Calu3 (cell line): ENCODE measurements at regions of chr1 and their contacts with region 1.

Region 1: DNA sequence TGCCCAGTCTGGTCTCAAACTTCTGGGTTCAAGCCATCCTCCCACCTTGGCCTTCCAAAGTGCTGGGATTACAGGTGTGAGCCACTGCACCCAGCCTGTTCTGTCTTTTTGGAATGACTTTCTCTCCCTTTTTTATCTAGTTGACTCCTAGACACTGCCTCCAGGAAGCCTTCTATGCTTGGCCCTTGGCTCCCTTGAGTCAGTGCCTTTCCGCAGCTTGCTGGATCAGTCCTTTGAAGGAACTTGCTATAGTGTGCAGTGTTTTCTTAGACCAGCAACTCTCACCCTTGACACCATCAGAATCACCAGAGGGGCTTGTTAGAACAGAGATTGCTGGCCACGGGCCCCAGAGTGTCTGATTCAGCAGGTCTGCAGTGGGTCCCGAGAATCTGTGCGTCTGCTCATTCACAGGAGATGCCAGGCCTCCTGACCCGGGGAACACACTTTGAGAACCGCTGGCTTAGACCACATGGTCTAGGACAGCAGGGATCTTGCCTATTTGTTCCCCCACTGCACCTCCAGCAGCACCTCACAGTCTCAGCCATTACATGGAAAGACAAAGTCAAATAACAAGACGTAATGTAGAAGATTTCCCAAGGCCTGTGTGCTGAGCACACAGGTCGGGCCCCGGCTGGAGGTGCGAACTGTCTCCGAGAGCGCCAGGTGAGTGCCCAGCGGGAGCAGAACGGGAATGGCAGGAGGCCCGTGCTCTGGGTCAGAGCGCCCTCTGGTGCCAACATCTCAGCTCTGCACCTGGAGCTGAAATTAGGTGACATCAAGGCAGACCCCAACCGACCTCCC is 27.4 kb upstream of the CTPS1 start:
- DNase-seq: peak; percentile 84
- H3K4me3 Mint-ChIP-seq: no peak overlapping the region
- H3K27ac Mint-ChIP-seq: no peak overlapping the region
- H3K4me1 Mint-ChIP-seq: peaks cover 49% of the 10 kb centered on the region
- H3K27me3 Mint-ChIP-seq: no peaks in the 10 kb centered on the region
- CTCF ChIP-seq: peak; percentile 94

Region 2: DNA sequence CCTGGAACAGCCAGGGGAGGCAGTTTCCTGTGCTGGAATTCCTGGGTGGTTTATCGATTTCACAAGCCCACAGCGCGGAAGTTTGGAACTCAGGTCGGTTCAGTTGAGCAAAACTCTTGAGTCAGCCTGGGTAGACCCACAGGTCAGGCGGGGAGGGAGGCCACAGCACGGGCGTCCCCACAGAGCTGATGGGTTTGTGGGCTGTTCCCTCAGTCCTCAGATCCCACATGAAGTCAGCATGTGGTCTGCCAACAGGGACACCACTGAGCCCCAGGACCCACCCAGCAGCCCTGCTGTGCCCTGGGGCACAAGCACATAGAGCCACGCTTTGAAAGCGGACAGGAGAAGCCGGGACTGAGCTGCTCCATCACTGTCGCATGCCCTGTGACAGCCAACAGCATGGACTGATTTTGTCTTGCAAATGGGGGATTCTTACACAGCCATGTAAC is 1443.3 kb before region 1 on chr1:
- CTCF ChIA-PET with region 1: no interaction called
- intact Hi-C with region 1: no loop called
- DNase-seq: peak; percentile 39
- H3K4me3 Mint-ChIP-seq: no peak overlapping the region
- H3K27ac Mint-ChIP-seq: no peak overlapping the region
- H3K4me1 Mint-ChIP-seq: peaks cover 12% of the 10 kb centered on the region
- H3K27me3 Mint-ChIP-seq: no peaks in the 10 kb centered on the region
- CTCF ChIP-seq: no peak

Region 3: GRCh38 chr1:40612345-40612831 is 339.8 kb before region 1 on chr1:
- CTCF ChIA-PET with region 1: no interaction called
- intact Hi-C with region 1: loop called (anchors 10 kb)
- DNase-seq: peak; percentile 71
- H3K4me3 Mint-ChIP-seq: no peak overlapping the region
- H3K27ac Mint-ChIP-seq: no peak overlapping the region
- H3K4me1 Mint-ChIP-seq: no peaks in the 10 kb centered on the region
- H3K27me3 Mint-ChIP-seq: peaks cover 27% of the 10 kb centered on the region
- CTCF ChIP-seq: peak; percentile 66

Region 4: DNA sequence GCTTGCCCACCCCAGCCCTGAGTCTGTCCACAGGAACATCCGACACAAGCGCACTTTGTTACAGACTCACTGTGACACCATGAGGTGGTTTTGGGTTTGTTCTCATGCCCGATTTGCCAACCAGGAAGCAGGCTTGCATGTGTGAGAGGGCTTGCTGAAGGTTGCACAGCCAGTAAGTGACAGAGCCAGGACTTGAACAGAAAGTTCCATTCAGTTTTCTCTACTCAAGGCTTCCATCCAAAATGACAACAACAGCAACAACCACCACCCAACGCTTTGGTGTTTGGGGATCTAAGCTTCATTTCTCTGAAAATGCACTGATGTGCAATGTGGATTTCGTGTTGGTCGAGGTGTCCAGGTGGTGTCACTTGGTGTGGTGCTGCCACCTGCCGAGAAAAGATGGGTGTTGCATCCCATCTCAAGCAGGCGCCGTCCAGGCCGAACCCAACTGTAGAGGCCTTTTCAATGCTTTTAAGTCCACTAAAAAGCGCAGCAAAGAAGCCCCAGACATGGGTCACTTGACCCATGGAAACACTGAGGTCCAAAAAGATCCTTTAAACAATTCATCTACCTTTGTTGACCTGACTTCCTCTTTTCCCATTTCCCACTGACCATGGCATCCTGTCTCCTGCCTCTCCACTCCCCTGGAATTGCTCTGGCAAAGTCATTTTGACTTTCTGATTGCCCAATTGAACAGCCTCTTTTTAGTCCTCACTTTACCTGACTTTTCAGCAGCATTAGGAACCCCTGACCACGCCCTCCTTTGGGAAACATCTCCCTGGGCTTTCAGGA is 102.1 kb before region 1 on chr1:
- CTCF ChIA-PET with region 1: interaction called, 37 read pairs
- intact Hi-C with region 1: loop called (anchors 1 kb)
- DNase-seq: peak; percentile 78
- H3K4me3 Mint-ChIP-seq: no peak overlapping the region
- H3K27ac Mint-ChIP-seq: no peak overlapping the region
- H3K4me1 Mint-ChIP-seq: peaks cover 19% of the 10 kb centered on the region
- H3K27me3 Mint-ChIP-seq: no peaks in the 10 kb centered on the region
- CTCF ChIP-seq: peak; percentile 88

Region 5: DNA sequence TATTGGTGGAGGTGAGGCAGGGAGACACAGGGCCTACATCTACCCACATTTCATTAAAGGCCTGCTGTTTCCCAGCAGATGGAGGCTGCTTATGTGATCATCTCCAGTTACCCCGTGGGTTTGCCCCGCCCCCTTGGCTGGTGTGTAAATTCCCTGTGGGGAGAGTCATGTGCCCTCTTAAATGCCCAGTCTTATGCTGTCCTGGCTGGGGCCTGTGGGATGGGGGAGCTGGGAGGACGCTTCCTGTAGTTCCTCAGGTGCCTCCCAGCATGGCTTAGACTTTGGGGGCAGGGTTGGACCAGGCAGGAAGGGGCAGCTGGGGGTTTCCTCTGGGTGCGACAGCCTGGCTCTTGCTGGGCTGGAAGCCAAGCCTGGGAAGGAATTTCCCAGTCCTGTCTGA is 74.4 kb before region 1 on chr1:
- CTCF ChIA-PET with region 1: interaction called, 13 read pairs
- intact Hi-C with region 1: no loop called
- DNase-seq: peak; percentile 88
- H3K4me3 Mint-ChIP-seq: no peak overlapping the region
- H3K27ac Mint-ChIP-seq: peak overlapping the region; percentile 96
- H3K4me1 Mint-ChIP-seq: peaks cover 68% of the 10 kb centered on the region
- H3K27me3 Mint-ChIP-seq: no peaks in the 10 kb centered on the region
- CTCF ChIP-seq: no peak

Region 6: DNA sequence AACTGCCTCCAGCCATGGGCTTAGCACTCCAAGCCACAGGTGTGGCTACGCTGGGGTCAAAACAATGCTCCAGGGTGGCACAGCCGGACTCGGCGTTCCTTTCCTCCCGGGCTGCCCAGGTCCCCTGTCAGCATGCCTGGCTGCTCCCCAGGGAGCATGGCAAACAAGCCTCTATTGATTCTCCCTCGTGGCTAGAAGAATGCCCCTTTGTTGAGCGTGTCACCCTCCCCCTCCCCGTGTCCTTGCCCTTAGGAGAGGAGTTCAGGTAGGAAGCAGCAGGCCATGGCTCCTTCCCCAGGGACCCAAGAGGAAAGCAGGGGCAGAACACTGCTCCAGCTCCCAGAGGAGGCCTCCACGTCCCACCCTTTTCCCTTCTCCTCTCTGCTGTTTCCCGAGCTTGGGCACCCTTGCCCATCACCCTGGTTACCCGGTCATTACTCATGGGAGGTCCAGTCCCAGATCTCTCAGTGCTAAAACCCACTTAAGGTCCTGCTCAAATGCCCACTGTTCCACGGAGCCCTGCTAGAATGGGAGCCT is 32.6 kb before region 1 on chr1:
- CTCF ChIA-PET with region 1: interaction called, 9 read pairs
- intact Hi-C with region 1: loop called (anchors 2 kb)
- DNase-seq: peak; percentile 95
- H3K4me3 Mint-ChIP-seq: no peak overlapping the region
- H3K27ac Mint-ChIP-seq: peak overlapping the region; percentile 91
- H3K4me1 Mint-ChIP-seq: peaks cover 62% of the 10 kb centered on the region
- H3K27me3 Mint-ChIP-seq: no peaks in the 10 kb centered on the region
- CTCF ChIP-seq: no peak